ENCODE measurements at regions of chr3 and their contacts with region 1.

Region 1: DNA sequence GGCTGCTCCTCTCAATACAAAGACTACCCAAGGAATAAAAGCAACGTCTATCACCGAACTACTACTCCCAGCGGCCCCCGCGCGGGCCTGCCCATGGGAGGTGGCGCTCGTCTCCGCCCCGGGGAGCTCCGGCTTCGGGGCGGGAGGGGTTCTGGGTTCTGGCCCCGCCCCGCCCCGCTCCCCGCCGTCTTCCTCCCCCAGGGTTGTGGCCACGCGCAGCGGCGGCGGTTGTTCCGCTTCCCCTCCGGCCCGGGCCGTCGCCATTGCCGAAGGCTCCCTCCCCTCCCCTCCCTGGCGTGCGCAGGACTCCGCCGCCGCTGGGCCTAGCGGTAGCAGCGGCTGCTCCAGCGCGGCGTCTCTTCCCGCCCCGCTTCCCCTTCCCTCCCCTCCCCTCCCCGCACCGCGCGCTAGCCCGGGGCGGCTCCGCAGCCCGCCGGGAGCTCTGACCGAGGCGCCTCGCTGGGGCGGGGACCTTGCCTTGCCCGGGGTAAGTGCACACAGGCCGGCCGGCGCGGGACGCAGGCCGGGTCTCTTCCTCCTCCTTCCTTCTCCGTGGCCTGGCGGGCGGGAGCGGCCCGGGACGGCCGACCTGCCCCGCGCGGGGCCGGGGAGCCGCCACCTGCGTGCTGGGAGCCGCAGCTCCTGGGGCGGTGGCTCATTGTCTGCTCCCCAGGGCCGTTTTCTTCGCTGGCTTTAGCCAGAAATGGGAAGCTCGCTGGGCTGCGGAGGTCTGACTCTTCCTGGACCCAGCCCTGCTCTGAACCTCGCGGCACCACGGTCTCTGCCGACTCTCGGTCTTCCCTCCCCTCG is at the start of gene PAK2:
- DNase-seq: peak; percentile 88
- H3K4me3 ChIP-seq: peak within 1 kb of the TSS; percentile 64 to 96 (median 76)
- H3K27ac ChIP-seq: peak within 1 kb of the TSS; percentile 97
- H3K4me1 ChIP-seq: peaks cover 3% of the 10 kb centered on the region
- H3K27me3 ChIP-seq: no peaks in the 10 kb centered on the region
- CTCF ChIP-seq: no peak
- total RNA-seq, gene PAK2: 29.5 to 83.7 TPM

Region 2: DNA sequence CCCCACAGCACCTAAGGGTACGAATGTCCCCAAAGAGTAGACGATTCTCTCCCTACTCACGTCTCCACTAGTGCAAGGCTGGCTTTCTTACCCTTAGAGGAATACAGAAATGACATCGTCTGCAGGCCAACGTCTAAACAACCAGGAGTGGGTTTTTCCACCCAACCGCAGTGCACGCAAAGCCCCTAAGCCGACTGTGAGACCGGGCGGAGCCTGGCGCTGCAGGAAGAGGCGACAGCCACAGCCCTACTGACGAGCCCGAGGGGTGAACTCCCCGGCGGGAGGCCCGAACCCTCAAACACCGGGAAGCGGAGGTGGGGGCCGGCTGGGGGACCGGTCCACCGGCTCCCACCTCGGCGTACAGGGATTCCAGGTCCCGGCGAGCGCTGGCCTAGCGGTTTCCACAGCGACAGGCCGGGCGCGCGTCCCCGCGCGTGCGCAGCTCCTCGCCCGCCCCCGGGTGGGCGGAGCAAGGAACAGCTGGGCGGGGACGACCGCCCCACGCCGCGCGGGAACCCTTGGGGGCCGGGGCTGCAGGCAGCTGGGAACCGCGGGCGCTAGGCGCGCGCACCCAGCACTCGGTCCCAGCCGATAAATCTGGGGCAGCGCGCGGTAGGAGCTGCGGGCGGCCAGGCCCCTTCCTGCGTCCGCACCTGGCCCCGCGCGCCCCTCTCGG is 27.9 kb before region 1 on chr3 and contains the starts of genes CEP19 and PIGX:
- CTCF ChIA-PET with region 1: no interaction called
- dilution Hi-C with region 1: no loop called
- in situ Hi-C with region 1: no loop called
- intact Hi-C with region 1: loop called (anchors 1 kb)
- DNase-seq: peak; percentile 82
- H3K4me3 ChIP-seq: peak within 1 kb of the TSS; percentile 67 to 94 (median 74)
- H3K27ac ChIP-seq: peak within 1 kb of the TSS; percentile 58
- H3K4me1 ChIP-seq: peaks cover 4% of the 10 kb centered on the region
- H3K27me3 ChIP-seq: no peaks in the 10 kb centered on the region
- CTCF ChIP-seq: no peak
- total RNA-seq, gene CEP19: 1.7 to 2.0 TPM
- total RNA-seq, gene PIGX: 25.7 to 28.3 TPM

Region 3: GRCh38 chr3:196778755-196779154 is 38.9 kb after region 1 on chr3:
- CTCF ChIA-PET with region 1: no interaction called
- dilution Hi-C with region 1: no loop called
- in situ Hi-C with region 1: no loop called
- intact Hi-C with region 1: loop called (anchors 1 kb)
- DNase-seq: peak; percentile 84
- H3K4me3 ChIP-seq: no peak overlapping the region
- H3K27ac ChIP-seq: peak overlapping the region; percentile 4
- H3K4me1 ChIP-seq: peaks cover 32% of the 10 kb centered on the region
- H3K27me3 ChIP-seq: no peaks in the 10 kb centered on the region
- CTCF ChIP-seq: no peak

Region 4: GRCh38 chr3:196793235-196793641 is 53.4 kb after region 1 on chr3:
- CTCF ChIA-PET with region 1: no interaction called
- dilution Hi-C with region 1: no loop called
- in situ Hi-C with region 1: no loop called
- intact Hi-C with region 1: loop called (anchors 2 kb)
- DNase-seq: peak; percentile 94
- H3K4me3 ChIP-seq: peak overlapping the region in 1 of 3 experiments; percentile 16
- H3K27ac ChIP-seq: peak overlapping the region; percentile 37
- H3K4me1 ChIP-seq: peaks cover 29% of the 10 kb centered on the region
- H3K27me3 ChIP-seq: no peaks in the 10 kb centered on the region
- CTCF ChIP-seq: no peak

Region 5: DNA sequence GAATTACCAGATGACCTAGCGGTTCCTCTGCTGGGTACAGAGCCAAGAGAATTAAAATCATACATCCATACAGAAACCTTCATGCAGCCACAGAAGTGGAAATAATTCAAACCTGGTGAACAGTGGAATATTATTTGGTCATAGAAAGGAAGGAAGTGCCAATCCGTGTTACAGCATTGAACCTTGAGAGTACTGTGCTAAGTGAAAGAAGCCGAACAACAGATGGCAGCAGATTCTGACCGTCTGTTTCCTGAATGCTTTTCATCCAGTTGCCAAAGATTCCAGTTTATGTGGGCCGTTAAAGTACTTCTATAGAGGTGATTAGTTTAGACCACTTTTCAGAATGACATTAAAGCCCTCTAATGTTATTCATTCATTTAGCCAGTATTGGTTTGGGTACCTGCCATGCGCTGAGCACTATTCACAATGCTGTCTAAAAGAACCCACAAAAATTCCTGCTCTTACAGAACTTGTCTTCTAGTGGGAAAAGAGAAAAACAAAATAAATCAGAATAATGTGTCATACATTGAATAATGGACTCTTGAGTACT is 82.0 kb after region 1 on chr3:
- CTCF ChIA-PET with region 1: no interaction called
- dilution Hi-C with region 1: no loop called
- in situ Hi-C with region 1: no loop called
- intact Hi-C with region 1: no loop called
- DNase-seq: no peak
- H3K4me3 ChIP-seq: no peak overlapping the region
- H3K27ac ChIP-seq: no peak overlapping the region
- H3K4me1 ChIP-seq: no peaks in the 10 kb centered on the region
- H3K27me3 ChIP-seq: no peaks in the 10 kb centered on the region
- CTCF ChIP-seq: no peak

Region 6: DNA sequence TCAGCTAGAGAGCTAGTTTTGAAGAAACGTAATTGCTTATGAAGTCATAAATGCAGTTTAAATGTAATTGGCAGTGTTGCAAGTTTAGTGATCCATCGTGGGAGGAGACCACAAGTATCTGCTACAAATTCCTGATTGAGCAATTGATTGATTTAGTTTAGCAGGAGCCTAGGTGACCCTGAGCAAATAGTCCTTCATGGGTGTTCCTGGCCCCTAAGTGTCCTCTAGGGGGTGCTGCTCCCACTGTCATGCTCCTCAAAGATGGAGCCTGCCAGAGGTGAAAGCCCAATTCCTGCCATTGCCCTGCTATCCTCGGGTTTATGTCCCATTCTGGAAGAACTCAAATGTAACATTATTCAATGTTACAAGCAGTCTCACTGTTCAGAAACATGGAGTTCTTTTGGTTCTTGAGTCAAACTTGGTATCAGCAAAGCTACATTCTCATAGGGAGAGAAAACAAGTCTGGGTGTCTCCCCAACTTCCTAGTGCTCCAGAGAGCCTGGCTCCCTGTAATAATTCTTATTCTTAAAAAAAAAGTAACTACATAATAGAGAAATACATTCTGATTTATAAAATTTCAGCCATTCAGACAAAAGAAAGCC is 98.0 kb after region 1 on chr3:
- CTCF ChIA-PET with region 1: interaction called, 3 read pairs
- dilution Hi-C with region 1: no loop called
- in situ Hi-C with region 1: no loop called
- intact Hi-C with region 1: loop called (anchors 2 kb)
- DNase-seq: peak; percentile 36
- H3K4me3 ChIP-seq: no peak overlapping the region
- H3K27ac ChIP-seq: no peak overlapping the region
- H3K4me1 ChIP-seq: no peaks in the 10 kb centered on the region
- H3K27me3 ChIP-seq: no peaks in the 10 kb centered on the region
- CTCF ChIP-seq: peak; percentile 85 to 89

Measured in mammary epithelial cell (primary cell).